ENCODE measurements at regions of chr9 and their contacts with region 1.

Region 1: DNA sequence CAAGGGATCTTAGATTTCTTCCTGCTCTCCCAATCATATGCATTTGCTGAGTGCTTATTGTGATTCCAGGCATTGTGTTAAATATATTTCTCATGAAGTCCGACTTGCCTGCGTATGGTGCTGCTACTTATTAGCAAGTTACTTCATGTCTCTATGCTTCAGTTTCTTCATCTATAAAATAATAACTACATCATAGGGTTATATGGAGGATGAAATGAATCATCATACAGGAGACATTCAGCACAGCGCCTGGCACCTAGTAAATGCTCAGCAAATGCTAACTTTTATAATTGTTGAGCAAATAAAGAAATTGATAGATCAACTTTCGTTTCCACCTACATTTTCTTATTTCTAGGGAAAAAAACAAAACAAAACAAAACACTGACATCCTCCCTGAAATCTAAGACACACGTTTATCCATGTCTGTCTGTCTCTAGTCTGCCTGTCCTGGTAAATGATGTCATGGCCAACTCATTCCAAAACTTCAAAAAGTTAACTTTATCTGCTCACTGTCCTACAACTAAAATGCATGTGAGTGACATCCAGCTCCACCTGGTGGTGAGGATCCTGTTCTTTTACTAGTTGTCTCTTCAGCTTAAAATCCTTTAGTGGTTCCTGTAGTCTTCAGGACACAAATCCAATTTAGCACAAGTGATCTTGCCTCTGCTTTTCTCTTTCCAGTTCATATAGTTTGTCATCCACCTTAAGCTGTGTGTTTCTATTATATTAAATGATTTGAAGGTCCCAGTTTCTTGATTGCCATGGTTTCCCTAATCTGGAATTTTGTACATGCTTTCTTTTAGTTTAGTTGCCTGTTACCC is 27.7 kb downstream of the PPP3R2 start:
- DNase-seq: peak in 6 of 9 donors; percentile 15 to 51 (median 44)
- ATAC-seq: no peak
- H3K4me3 ChIP-seq: no peak overlapping the region
- H3K4me3 Mint-ChIP-seq: peak overlapping the region in 2 of 10 donors; percentile 2 to 4
- H3K27ac ChIP-seq: no peak overlapping the region
- H3K27ac Mint-ChIP-seq: peak overlapping the region in 8 of 9 donors; percentile 22 to 98 (median 93)
- H3K4me1 ChIP-seq: peaks cover 4 to 53% of the 10 kb centered on the region in 2 donors
- H3K4me1 Mint-ChIP-seq: peaks cover 22 to 60% (median 54%) of the 10 kb centered on the region in 7 donors
- H3K27me3 ChIP-seq: no peaks in the 10 kb centered on the region
- H3K27me3 Mint-ChIP-seq: no peaks in the 10 kb centered on the region

Region 2: DNA sequence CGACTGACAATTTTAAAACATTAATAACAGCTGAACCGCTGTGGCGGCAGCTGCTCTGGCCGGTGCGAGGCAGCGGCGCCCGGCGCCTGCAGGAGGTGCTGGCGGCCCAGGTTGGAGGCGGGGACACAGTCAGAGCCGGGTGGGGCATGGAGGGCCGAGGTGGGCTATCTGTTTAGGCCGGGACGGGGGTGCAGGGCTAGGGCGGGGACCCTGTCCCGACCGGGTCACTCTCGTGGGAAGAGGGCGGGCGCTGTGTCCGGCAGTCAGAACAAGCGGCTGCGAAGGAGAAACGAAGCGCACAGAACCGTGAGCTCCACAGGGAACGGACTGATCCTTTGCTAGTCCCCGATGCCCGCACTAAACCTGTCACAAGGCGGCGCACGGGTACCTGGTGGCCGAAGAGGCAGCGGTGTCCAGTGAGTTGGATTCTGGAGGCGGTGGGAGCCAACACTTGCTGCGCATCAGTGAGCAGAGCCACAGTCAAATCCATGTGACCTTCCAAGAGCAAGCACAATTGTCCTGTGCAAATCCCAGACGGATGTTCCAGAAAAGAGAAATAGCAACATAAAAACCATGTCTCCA is 117.9 kb before region 1 on chr9:
- CTCF ChIA-PET with region 1: no interaction called
- POLR2A ChIA-PET with region 1: no interaction called
- intact Hi-C with region 1: loop called in 1 of 2 experiments (anchors 2 kb)
- DNase-seq: peak; percentile 1 to 44 (median 30)
- ATAC-seq: peak; percentile 84
- H3K4me3 ChIP-seq: peak overlapping the region; percentile 40
- H3K4me3 Mint-ChIP-seq: peak overlapping the region; percentile 41 to 79 (median 68)
- H3K27ac ChIP-seq: no peak overlapping the region
- H3K27ac Mint-ChIP-seq: no peak overlapping the region
- H3K4me1 ChIP-seq: peaks cover 0 to 6% of the 10 kb centered on the region in 2 donors
- H3K4me1 Mint-ChIP-seq: peaks cover 5 to 11% (median 7%) of the 10 kb centered on the region in 7 donors
- H3K27me3 ChIP-seq: peaks cover 0 to 6% of the 10 kb centered on the region in 2 donors
- H3K27me3 Mint-ChIP-seq: peaks cover 60 to 76% (median 71%) of the 10 kb centered on the region in 5 donors

Region 3: GRCh38 chr9:101458955-101459631 is 108.0 kb before region 1 on chr9:
- CTCF ChIA-PET with region 1: interaction called, 4 read pairs
- POLR2A ChIA-PET with region 1: no interaction called
- intact Hi-C with region 1: loop called in 1 of 2 experiments (anchors 1 kb)
- DNase-seq: peak in 7 of 9 donors; percentile 9 to 49 (median 27)
- ATAC-seq: peak; percentile 84
- H3K4me3 ChIP-seq: no peak overlapping the region
- H3K4me3 Mint-ChIP-seq: no peak overlapping the region
- H3K27ac ChIP-seq: no peak overlapping the region
- H3K27ac Mint-ChIP-seq: no peak overlapping the region
- H3K4me1 ChIP-seq: no peaks in the 10 kb centered on the region
- H3K4me1 Mint-ChIP-seq: peaks cover 0 to 2% (median 0%) of the 10 kb centered on the region in 7 donors
- H3K27me3 ChIP-seq: no peaks in the 10 kb centered on the region
- H3K27me3 Mint-ChIP-seq: peaks cover 8 to 26% (median 17%) of the 10 kb centered on the region in 5 donors

Region 4: DNA sequence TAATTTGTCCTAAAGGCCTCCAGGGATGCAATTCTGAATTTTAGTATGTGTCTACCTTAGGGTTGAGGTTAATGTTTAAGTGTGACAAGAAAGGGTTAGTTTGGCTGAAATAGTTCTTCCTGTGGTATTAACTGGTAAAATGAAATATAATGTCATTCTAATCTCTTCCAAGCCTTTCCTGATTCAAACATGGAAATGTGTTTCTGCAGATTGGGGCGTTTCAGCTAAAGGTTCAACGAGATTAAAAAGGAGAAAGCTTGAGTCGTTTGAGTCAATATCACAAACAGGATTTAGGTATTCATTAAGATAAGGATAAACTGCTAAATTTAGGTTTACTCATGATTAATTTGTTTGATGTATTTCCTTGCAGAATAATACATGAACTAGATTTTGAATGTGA is 97.1 kb before region 1 on chr9:
- CTCF ChIA-PET with region 1: no interaction called
- POLR2A ChIA-PET with region 1: no interaction called
- intact Hi-C with region 1: no loop called
- DNase-seq: no peak
- ATAC-seq: no peak
- H3K4me3 ChIP-seq: no peak overlapping the region
- H3K4me3 Mint-ChIP-seq: no peak overlapping the region
- H3K27ac ChIP-seq: no peak overlapping the region
- H3K27ac Mint-ChIP-seq: no peak overlapping the region
- H3K4me1 ChIP-seq: no peaks in the 10 kb centered on the region
- H3K4me1 Mint-ChIP-seq: no peaks in the 10 kb centered on the region
- H3K27me3 ChIP-seq: no peaks in the 10 kb centered on the region
- H3K27me3 Mint-ChIP-seq: peaks cover 17 to 40% (median 26%) of the 10 kb centered on the region in 5 donors

Region 5: GRCh38 chr9:101578378-101578777 is 11.3 kb after region 1 on chr9:
- CTCF ChIA-PET with region 1: interaction called, 5 read pairs
- POLR2A ChIA-PET with region 1: interaction called, 5 read pairs
- intact Hi-C with region 1: loop called in 1 of 2 experiments (anchors 1 kb)
- DNase-seq: no peak
- ATAC-seq: peak; percentile 59
- H3K4me3 ChIP-seq: no peak overlapping the region
- H3K4me3 Mint-ChIP-seq: no peak overlapping the region
- H3K27ac ChIP-seq: no peak overlapping the region
- H3K27ac Mint-ChIP-seq: no peak overlapping the region
- H3K4me1 ChIP-seq: peaks cover 0 to 25% of the 10 kb centered on the region in 2 donors
- H3K4me1 Mint-ChIP-seq: peaks cover 10 to 29% (median 24%) of the 10 kb centered on the region in 7 donors
- H3K27me3 ChIP-seq: no peaks in the 10 kb centered on the region
- H3K27me3 Mint-ChIP-seq: no peaks in the 10 kb centered on the region

Region 6: GRCh38 chr9:101586651-101587050 is 19.5 kb after region 1 on chr9:
- CTCF ChIA-PET with region 1: interaction called, 3 read pairs
- POLR2A ChIA-PET with region 1: interaction called, 5 read pairs
- intact Hi-C with region 1: loop called in 1 of 2 experiments (anchors 2 kb)
- DNase-seq: no peak
- ATAC-seq: no peak
- H3K4me3 ChIP-seq: no peak overlapping the region
- H3K4me3 Mint-ChIP-seq: no peak overlapping the region
- H3K27ac ChIP-seq: no peak overlapping the region
- H3K27ac Mint-ChIP-seq: peak overlapping the region in 2 of 9 donors; percentile 14
- H3K4me1 ChIP-seq: no peaks in the 10 kb centered on the region
- H3K4me1 Mint-ChIP-seq: peaks cover 0 to 16% (median 4%) of the 10 kb centered on the region in 7 donors
- H3K27me3 ChIP-seq: no peaks in the 10 kb centered on the region
- H3K27me3 Mint-ChIP-seq: peaks cover 0 to 3% (median 0%) of the 10 kb centered on the region in 5 donors

Region 7: GRCh38 chr9:101601904-101602765 is 35.0 kb after region 1 on chr9:
- CTCF ChIA-PET with region 1: interaction called, 8 read pairs
- POLR2A ChIA-PET with region 1: no interaction called
- intact Hi-C with region 1: loop called in 1 of 2 experiments (anchors 2 kb)
- DNase-seq: peak in 7 of 9 donors; percentile 11 to 45 (median 40)
- ATAC-seq: peak; percentile 66
- H3K4me3 ChIP-seq: no peak overlapping the region
- H3K4me3 Mint-ChIP-seq: peak overlapping the region in 7 of 10 donors; percentile 26 to 78 (median 68)
- H3K27ac ChIP-seq: no peak overlapping the region
- H3K27ac Mint-ChIP-seq: peak overlapping the region in 1 of 9 donors; percentile 80
- H3K4me1 ChIP-seq: no peaks in the 10 kb centered on the region
- H3K4me1 Mint-ChIP-seq: peaks cover 0 to 6% (median 4%) of the 10 kb centered on the region in 7 donors
- H3K27me3 ChIP-seq: no peaks in the 10 kb centered on the region
- H3K27me3 Mint-ChIP-seq: peaks cover 0 to 17% (median 4%) of the 10 kb centered on the region in 5 donors

Region 8: GRCh38 chr9:101705135-101705661 is 138.1 kb after region 1 on chr9:
- CTCF ChIA-PET with region 1: interaction called, 3 read pairs
- POLR2A ChIA-PET with region 1: no interaction called
- intact Hi-C with region 1: loop called in 1 of 2 experiments (anchors 1 kb)
- DNase-seq: peak in 6 of 9 donors; percentile 11 to 42 (median 35)
- ATAC-seq: peak; percentile 90
- H3K4me3 ChIP-seq: peak overlapping the region; percentile 49
- H3K4me3 Mint-ChIP-seq: peak overlapping the region; percentile 68 to 93 (median 86)
- H3K27ac ChIP-seq: no peak overlapping the region
- H3K27ac Mint-ChIP-seq: peak overlapping the region in 6 of 9 donors; percentile 9 to 78 (median 64)
- H3K4me1 ChIP-seq: peaks cover 0 to 3% of the 10 kb centered on the region in 2 donors
- H3K4me1 Mint-ChIP-seq: peaks cover 5 to 26% (median 13%) of the 10 kb centered on the region in 7 donors
- H3K27me3 ChIP-seq: no peaks in the 10 kb centered on the region
- H3K27me3 Mint-ChIP-seq: peaks cover 0 to 19% (median 10%) of the 10 kb centered on the region in 5 donors